HCT116 (cell line): ENCODE measurements at regions of chr2 and their contacts with region 1.

Region 1: DNA sequence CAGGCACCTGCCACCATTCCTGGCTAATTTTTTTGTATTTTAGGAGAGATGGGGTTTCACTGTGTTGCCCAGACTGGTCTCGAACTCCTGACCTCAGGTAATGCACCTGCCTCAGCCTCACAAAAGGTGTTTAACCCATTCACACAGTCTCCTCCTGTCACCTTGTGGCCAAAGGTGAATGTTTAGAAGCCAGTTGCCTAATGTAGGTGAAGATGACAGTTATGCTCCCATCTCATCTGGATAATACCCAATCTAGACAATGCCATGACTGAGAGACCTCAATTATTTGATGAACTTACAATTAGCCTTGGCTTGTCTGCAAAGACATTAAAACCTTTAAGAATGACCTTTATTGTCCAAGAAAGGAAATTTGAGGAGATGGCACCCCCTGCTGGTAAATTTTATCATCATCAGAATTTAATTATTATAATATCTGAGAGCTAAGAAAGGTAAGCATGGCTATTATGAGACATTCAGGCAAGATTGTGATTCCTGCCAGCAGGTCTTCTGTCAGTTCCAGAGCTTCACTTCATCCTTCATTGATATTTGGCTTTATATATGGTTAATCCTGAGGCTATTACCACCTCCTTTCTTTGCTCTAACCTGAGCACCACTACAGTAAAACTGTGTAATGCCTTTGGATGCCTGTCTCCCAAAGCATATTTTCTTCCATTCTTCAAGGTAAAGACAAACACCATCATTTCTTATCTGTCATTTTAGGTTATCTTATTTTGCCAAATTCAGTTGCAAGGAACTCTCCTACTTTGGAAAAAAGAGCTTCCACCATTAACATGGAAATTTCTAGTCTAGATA is 117.6 kb downstream of the FAM124B start:
- DNase-seq: peak; percentile 61
- ATAC-seq: peak; percentile 83
- H3K4me3 ChIP-seq: no peak overlapping the region
- H3K27ac ChIP-seq: no peak overlapping the region
- H3K4me1 ChIP-seq: no peaks in the 10 kb centered on the region
- H3K27me3 ChIP-seq: no peaks in the 10 kb centered on the region
- CTCF ChIP-seq: peak; percentile 55 to 99 (median 87)
- POLR2A ChIP-seq: no peak
- RAD21 ChIP-seq: peak; percentile 98

Region 2: DNA sequence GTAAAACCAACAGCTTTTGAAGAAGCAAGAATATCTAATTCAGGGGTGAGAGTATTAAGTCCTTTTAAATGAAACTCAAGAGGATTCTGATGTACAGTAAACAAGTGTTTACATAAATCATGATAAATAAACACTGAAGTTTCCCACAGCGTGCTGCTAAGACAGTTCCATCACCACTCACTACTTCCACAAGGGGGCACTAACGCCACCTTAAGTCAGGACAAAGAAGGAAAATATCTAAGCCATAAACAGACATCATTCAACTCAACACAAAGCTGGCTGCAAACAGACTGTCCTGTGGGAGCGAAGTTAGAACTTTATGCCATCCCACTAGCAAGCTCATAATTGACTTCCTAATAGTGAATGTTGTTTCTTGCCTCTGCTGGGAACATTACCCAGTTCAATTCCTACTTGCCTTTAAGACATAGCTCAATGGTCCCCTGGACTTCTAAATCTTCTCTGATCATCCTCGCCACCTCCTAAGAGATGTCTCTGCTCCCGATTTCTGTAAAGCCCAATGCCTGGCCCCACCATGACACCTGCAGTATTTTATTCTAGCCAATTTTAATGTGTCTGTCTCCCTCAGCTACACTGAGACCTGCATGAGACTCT is 290.6 kb before region 1 on chr2:
- CTCF ChIA-PET with region 1: interaction called, 122 read pairs
- POLR2A ChIA-PET with region 1: interaction called, 10 read pairs
- RAD21 ChIA-PET with region 1: interaction called, 11 to 16 read pairs
- intact Hi-C with region 1: loop called (anchors 1 kb)
- DNase-seq: peak; percentile 78
- ATAC-seq: peak; percentile 85
- H3K4me3 ChIP-seq: no peak overlapping the region
- H3K27ac ChIP-seq: no peak overlapping the region
- H3K4me1 ChIP-seq: peaks cover 0 to 9% of the 10 kb centered on the region in 2 experiments; a peak in 2 of 4 replicates
- H3K27me3 ChIP-seq: no peaks in the 10 kb centered on the region
- CTCF ChIP-seq: peak; percentile 76 to 89 (median 87)
- POLR2A ChIP-seq: no peak
- RAD21 ChIP-seq: peak; percentile 92

Region 3: GRCh38 chr2:224039124-224039940 is 245.0 kb before region 1 on chr2 and contains the start of gene SERPINE2:
- CTCF ChIA-PET with region 1: interaction called, 6 read pairs
- POLR2A ChIA-PET with region 1: interaction called, 4 read pairs
- RAD21 ChIA-PET with region 1: interaction called, 3 to 9 read pairs
- intact Hi-C with region 1: loop called (anchors 1 kb)
- DNase-seq: peak; percentile 52
- ATAC-seq: peak; percentile 83
- H3K4me3 ChIP-seq: peak within 1 kb of the TSS; percentile 68 to 72
- H3K27ac ChIP-seq: peak within 1 kb of the TSS; percentile 67; the same call in 1 of the 2 replicates
- H3K4me1 ChIP-seq: peaks cover 7 to 18% of the 10 kb centered on the region in 2 experiments; a peak in 3 of 4 replicates
- H3K27me3 ChIP-seq: no peaks in the 10 kb centered on the region; the same call in 1 of the 2 replicates
- CTCF ChIP-seq: peak; percentile 49 to 90 (median 55)
- POLR2A ChIP-seq: peak; percentile 89
- RAD21 ChIP-seq: peak; percentile 98
- total RNA-seq, gene SERPINE2: 93.3 TPM

Region 4: GRCh38 chr2:224650815-224651439 is 366.6 kb after region 1 on chr2:
- CTCF ChIA-PET with region 1: interaction called, 3 read pairs
- POLR2A ChIA-PET with region 1: no interaction called
- RAD21 ChIA-PET with region 1: no interaction called
- intact Hi-C with region 1: loop called (anchors 5 kb)
- DNase-seq: peak; percentile 53
- ATAC-seq: peak; percentile 87
- H3K4me3 ChIP-seq: no peak overlapping the region
- H3K27ac ChIP-seq: no peak overlapping the region
- H3K4me1 ChIP-seq: peaks cover 0 to 2% of the 10 kb centered on the region in 2 experiments; a peak in 1 of 4 replicates
- H3K27me3 ChIP-seq: no peaks in the 10 kb centered on the region
- CTCF ChIP-seq: peak; percentile 72 to 90 (median 77); a peak in 5 of 6 replicates
- POLR2A ChIP-seq: no peak
- RAD21 ChIP-seq: peak; percentile 88